Esophagus muscularis mucosa (tissue), 4 donors: ENCODE measurements at regions of chr11 and their contacts with region 1.

Region 1: DNA sequence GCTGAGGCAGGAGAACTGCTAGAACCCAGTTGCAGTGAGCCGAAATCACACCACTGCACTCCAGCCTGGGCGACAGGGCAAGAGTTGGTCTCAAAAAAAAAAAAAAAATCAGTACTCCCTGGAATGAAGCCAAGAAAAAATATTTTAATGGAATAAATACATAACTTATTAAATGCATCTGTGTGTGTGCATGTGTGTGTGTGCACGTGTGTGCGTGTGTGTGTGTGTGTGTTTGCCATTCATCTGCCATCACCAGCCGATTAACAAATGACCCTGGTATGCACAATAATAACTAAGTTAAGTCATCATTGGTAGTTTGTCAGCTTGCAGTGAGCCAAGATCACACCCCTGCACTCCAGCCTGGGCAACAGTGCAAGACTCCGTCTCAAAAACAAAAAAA is 35.0 kb upstream of the SCGB1A1 start:
- DNase-seq: no peak
- H3K4me3 ChIP-seq: no peak overlapping the region
- H3K27ac ChIP-seq: no peak overlapping the region
- H3K4me1 ChIP-seq: peaks cover 6 to 11% (median 7%) of the 10 kb centered on the region in 4 donors
- H3K27me3 ChIP-seq: no peaks in the 10 kb centered on the region
- CTCF ChIP-seq: no peak
- EP300 ChIP-seq: no peak
- POLR2A ChIP-seq: no peak

Region 2: DNA sequence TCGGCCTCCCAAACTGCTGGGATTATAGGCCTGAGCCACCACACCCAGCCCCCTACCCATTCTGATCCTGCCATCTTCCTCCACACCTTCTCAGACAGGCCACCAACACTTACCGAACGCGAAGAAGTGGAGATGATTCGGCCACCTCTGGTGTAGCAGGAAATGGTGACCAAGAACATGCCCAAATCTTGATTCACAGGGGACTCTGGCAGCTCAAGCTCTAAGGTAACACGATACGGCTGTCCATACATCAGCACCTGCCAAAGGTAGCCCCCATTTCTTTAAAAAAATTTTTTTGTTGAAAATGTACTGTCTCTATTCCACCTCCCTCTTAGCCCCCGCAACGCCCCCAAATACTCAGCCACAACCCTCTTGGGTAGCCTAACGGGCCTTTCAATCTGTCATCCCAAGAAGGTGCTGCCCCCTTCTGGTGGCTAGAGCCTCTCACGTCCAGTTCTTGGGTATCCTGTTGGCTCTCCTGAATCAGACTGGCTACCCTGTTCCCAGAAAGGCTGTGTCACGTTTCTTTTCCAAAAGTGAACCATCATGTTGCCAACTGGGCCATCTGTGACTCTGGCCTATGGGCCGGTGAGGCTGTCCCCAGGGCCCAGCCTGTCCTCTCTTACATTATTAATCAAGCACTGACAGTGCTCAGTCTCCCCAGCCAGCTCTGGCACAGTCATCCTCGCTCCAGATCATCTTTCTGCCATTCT is 310.8 kb after region 1 on chr11:
- intact Hi-C with region 1: loop called (anchors 5 kb)
- DNase-seq: peak; percentile 93
- H3K4me3 ChIP-seq: no peak overlapping the region
- H3K27ac ChIP-seq: peak overlapping the region in 1 of 4 donors; percentile 7
- H3K4me1 ChIP-seq: peaks cover 8 to 24% (median 16%) of the 10 kb centered on the region in 4 donors
- H3K27me3 ChIP-seq: no peaks in the 10 kb centered on the region
- CTCF ChIP-seq: peak; percentile 73 to 81 (median 79)
- EP300 ChIP-seq: no peak
- POLR2A ChIP-seq: no peak

Region 3: GRCh38 chr11:62860835-62861563 is 477.2 kb after region 1 on chr11:
- intact Hi-C with region 1: loop called (anchors 10 kb)
- DNase-seq: no peak
- H3K4me3 ChIP-seq: no peak overlapping the region
- H3K27ac ChIP-seq: no peak overlapping the region
- H3K4me1 ChIP-seq: peaks cover 10 to 21% (median 12%) of the 10 kb centered on the region in 4 donors
- H3K27me3 ChIP-seq: no peaks in the 10 kb centered on the region
- CTCF ChIP-seq: no peak
- EP300 ChIP-seq: no peak
- POLR2A ChIP-seq: no peak